ENCODE measurements at regions of chr18 and their contacts with region 1.

Region 1: DNA sequence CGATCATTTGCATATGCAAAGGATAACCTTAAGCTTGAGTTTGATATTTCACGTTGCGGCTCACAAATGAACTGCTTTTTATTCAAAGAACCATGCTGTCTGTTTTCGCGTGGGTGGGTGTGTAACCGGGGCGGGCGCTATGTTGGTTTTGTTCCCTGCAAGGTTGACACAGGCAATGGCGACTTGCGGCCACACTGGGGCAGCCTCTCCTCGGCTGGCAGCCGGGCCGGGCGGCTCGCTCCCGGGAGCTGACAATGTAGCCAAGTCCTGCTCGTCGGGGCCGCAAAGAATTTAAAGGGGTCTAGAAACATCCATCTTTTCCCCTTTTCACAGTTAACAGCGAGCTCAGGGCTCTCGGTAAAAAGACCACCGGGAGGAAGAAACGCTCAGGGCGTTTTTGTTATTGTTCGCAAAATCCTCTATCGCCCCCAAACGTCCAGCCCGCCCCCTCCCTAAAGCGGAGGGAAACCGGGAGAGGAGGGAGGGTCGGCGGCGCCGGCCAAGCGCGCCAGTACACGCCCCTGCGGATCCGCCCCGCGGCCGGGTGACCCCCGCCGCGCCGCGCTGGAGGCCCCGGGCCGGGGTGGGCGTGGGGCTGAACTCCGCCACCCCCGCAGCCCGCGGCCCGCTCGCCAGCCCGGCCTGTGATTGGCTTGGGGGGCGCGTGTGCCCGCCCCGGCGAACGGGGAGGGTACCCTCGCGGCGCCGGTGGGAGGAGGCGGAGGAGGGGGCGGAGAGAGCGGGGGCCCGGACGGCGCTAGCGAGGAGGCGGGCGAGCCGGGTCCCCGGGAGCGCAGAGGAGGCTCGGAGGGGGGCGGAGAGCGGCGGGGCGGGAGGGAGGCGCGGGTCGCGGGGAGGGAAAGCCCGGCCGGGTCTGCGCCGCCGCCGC is at the start of gene NEDD4L:
- DNase-seq: peak; percentile 72 to 80
- H3K4me3 ChIP-seq: peak within 1 kb of the TSS; percentile 91
- H3K27ac ChIP-seq: peak within 1 kb of the TSS; percentile 77
- H3K4me1 ChIP-seq: peaks cover 27% of the 10 kb centered on the region
- H3K27me3 ChIP-seq: no peaks in the 10 kb centered on the region
- CTCF ChIP-seq: peak; percentile 91
- total RNA-seq, gene NEDD4L: 57.4 and 58.9 TPM in 2 replicates

Region 2: DNA sequence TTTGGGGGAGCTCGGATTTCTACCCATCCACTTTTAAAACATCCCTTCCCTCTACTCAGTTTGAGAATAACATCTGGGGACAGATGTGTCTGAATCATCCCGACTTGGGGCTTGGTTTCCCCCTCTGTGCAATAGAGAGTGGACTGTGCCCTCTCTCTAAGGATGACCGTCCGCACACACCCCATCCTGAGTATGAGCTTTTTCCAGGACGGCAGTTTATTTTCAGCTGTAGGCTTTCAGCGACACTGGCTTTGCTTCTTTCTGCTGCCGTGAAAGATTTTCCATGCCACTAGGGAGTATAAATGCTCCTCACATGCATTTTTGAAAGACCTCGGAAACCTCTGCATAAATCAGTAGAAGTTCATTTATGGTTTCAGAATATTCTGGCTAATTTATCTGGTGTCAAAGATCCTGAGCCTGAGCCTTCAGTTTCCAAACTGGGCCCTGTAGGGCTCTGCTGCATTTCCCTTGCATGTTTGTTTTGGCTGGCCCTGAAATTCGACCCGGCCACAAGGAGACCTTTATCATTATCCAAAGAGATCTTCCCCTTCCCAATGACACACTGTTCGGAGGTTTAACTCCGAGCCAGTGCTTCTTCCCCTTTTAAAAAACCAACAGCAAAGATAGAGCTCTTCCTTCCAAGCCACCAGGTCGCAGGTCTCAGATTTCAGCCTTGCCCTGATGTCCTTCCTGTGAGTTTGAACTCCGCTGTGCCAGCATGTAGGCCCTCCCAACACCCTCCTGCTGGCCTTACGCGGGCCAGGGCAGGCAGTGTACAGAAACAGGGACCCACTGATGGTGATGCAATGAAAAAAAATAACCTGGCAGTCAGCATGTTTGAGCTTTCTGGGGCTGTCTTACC is 510.5 kb before region 1 on chr18:
- CTCF ChIA-PET with region 1: no interaction called
- POLR2A ChIA-PET with region 1: no interaction called
- intact Hi-C with region 1: no loop called
- DNase-seq: no peak
- H3K4me3 ChIP-seq: no peak overlapping the region
- H3K27ac ChIP-seq: no peak overlapping the region
- H3K4me1 ChIP-seq: no peaks in the 10 kb centered on the region
- H3K27me3 ChIP-seq: no peaks in the 10 kb centered on the region
- CTCF ChIP-seq: no peak

Region 3: DNA sequence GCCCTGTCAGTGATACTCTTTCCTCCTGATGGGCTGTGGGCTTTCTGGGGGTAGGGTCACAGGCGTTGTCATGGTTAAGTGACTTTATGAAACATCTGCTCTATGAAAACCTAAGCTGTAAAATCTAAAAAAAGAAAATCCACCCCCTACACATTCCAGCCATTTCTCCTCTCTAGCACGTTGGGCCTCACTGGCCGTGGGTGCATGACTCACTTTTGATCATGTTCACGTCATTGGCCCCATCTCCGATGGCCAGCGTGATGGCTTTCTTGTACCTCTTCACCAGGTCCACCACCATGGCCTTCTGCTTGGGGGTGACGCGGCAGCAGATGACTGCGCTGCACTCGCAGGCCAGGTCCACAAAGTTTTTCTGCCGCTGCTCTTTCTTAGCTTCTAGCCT is 382.8 kb before region 1 on chr18:
- CTCF ChIA-PET with region 1: no interaction called
- POLR2A ChIA-PET with region 1: no interaction called
- intact Hi-C with region 1: no loop called
- DNase-seq: no peak
- H3K4me3 ChIP-seq: no peak overlapping the region
- H3K27ac ChIP-seq: no peak overlapping the region
- H3K4me1 ChIP-seq: no peaks in the 10 kb centered on the region
- H3K27me3 ChIP-seq: no peaks in the 10 kb centered on the region
- CTCF ChIP-seq: no peak

Region 4: DNA sequence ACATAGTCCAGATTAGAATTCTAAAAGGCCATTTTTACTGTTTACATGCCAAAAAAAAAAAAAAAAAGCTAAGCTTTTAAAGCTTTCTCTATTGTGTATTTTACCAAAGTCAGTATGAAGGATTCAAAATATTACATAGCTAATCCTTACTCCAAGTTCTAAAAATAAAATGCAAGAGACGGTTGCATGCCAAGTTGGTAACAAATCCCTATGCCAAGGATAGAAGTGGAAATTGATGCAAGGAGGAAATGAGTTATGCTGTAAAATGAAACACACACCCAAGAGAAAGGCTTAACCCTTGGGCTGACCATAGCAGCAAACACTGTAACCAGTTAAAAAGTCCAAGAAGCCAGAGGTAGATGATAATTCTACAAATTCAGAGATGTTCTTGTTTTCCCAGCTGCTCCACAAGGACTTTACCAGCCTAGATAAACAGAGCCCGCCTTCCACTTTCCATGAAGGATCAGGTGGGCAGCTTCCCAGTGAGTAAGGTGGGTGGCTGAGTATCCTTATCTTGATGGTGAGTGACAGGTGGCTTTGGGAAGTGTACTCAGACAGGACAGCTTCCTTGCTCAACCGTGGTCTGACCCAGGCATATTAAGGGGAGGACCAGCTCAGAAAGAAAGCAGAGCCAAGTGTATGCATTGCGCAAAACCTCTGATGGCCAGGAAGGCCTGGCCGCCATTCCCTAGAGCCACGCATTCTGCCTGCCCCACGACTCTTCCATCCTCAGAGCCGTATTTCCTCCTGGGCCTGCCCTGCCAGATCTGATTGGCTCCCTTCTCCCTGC is 275.0 kb before region 1 on chr18:
- CTCF ChIA-PET with region 1: no interaction called
- POLR2A ChIA-PET with region 1: interaction called, 30 read pairs
- intact Hi-C with region 1: no loop called
- DNase-seq: no peak
- H3K4me3 ChIP-seq: no peak overlapping the region
- H3K27ac ChIP-seq: 0 out of 2 replicates have a peak overlapping the region, but pooled peaks have one; percentile 17
- H3K4me1 ChIP-seq: peaks cover 54% of the 10 kb centered on the region
- H3K27me3 ChIP-seq: no peaks in the 10 kb centered on the region
- CTCF ChIP-seq: no peak

Region 5: DNA sequence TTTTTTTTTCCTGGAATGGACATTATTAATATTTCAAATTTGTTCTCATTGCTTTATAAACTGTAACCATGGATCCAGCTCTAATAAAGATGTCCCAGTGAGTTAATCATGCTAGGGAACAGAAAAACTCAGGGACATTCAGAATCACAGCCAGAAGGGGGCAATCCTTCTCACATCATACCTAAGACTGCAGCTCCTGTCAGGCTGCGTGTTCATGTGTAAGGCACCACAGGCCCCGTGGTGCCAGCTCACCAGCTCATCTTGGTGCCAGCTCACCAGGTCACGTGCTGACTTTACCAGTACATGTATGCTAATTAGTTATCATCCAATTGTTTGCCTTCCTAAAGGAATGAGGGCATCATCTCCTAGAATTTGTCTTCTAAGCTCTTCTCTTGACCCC is 84.5 kb before region 1 on chr18:
- CTCF ChIA-PET with region 1: no interaction called
- POLR2A ChIA-PET with region 1: no interaction called
- intact Hi-C with region 1: loop called (anchors 5 kb)
- DNase-seq: peak; percentile 2 to 40
- H3K4me3 ChIP-seq: no peak overlapping the region
- H3K27ac ChIP-seq: no peak overlapping the region
- H3K4me1 ChIP-seq: no peaks in the 10 kb centered on the region
- H3K27me3 ChIP-seq: no peaks in the 10 kb centered on the region
- CTCF ChIP-seq: peak; percentile 58; the same call in 1 of the 2 replicates

Region 6: DNA sequence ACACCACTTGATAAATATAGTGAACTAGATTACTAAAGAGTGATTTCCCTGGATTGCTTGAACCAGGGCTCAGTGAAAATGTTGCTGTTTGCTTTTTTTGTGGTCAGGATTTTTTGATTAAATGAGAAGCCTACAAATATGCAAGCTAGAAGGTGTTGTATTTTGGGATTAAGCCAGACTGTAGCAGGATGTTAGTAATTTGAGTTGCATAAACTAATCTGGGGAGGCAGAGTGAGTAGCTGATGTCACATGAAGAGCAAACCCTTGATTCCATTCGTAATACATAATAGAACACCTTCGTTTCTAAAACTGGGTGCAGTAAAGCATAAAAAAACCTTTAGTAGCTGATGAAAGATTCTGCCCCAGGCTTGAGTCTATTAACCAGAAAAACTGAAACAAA is 32.3 kb after region 1 on chr18:
- CTCF ChIA-PET with region 1: no interaction called
- POLR2A ChIA-PET with region 1: no interaction called
- intact Hi-C with region 1: no loop called
- DNase-seq: peak in 1 of 2 experiments; percentile 63
- H3K4me3 ChIP-seq: no peak overlapping the region
- H3K27ac ChIP-seq: no peak overlapping the region
- H3K4me1 ChIP-seq: peaks cover 20% of the 10 kb centered on the region
- H3K27me3 ChIP-seq: no peaks in the 10 kb centered on the region
- CTCF ChIP-seq: no peak

Region 7: GRCh38 chr18:58117786-58118403 is 74.2 kb after region 1 on chr18:
- CTCF ChIA-PET with region 1: interaction called, 10 read pairs
- POLR2A ChIA-PET with region 1: no interaction called
- intact Hi-C with region 1: loop called (anchors 1 kb)
- DNase-seq: peak; percentile 25 to 93
- H3K4me3 ChIP-seq: no peak overlapping the region
- H3K27ac ChIP-seq: peak overlapping the region; percentile 75
- H3K4me1 ChIP-seq: peaks cover 40% of the 10 kb centered on the region
- H3K27me3 ChIP-seq: no peaks in the 10 kb centered on the region
- CTCF ChIP-seq: no peak

Region 8: DNA sequence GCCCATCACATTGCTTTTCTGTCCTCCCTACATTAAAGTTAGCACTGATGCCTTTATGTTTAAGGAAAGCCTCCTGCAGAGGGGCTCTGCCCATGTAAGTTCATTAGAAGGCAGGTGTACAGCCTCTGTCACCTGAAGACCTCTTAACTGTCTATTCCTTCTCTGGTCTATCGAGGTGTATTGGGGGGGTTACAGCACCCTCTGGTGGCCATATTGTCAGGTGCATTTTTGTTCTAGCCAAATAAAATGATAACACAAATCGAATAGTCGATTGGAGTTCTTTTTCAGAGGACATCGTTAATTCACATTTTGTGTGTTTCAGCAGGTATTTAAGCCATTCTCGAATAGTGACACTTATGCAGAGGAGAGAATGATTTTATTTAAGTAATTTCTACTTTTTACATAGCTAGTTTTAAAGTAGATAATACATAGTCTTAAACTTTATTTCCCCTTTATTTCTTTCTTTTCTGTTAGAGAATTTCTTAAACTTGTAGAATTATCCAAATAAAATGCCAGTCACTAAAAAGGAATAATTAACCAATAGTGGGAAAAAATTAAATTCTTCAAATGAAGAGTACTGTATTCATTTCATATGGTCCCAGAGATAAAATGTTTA is 137.1 kb after region 1 on chr18:
- CTCF ChIA-PET with region 1: no interaction called
- POLR2A ChIA-PET with region 1: no interaction called
- intact Hi-C with region 1: loop called (anchors 1 kb)
- DNase-seq: peak; percentile 43 to 52
- H3K4me3 ChIP-seq: no peak overlapping the region
- H3K27ac ChIP-seq: no peak overlapping the region
- H3K4me1 ChIP-seq: peaks cover 60% of the 10 kb centered on the region
- H3K27me3 ChIP-seq: no peaks in the 10 kb centered on the region
- CTCF ChIP-seq: peak; percentile 94

Region 9: GRCh38 chr18:58493516-58494253 is 449.9 kb after region 1 on chr18:
- CTCF ChIA-PET with region 1: no interaction called
- POLR2A ChIA-PET with region 1: no interaction called
- intact Hi-C with region 1: loop called (anchors 10 kb)
- DNase-seq: peak; percentile 56 to 57
- H3K4me3 ChIP-seq: no peak overlapping the region
- H3K27ac ChIP-seq: no peak overlapping the region
- H3K4me1 ChIP-seq: 0 out of 2 replicates have a peak, but pooled peaks cover 3% of the 10 kb centered on the region
- H3K27me3 ChIP-seq: no peaks in the 10 kb centered on the region; the same call in 1 of the 2 replicates
- CTCF ChIP-seq: peak; percentile 90

Measured in PC-9 (cell line).